Tibial artery (tissue), 4 donors: ENCODE measurements at regions of chr10 and their contacts with region 1.

Region 1: DNA sequence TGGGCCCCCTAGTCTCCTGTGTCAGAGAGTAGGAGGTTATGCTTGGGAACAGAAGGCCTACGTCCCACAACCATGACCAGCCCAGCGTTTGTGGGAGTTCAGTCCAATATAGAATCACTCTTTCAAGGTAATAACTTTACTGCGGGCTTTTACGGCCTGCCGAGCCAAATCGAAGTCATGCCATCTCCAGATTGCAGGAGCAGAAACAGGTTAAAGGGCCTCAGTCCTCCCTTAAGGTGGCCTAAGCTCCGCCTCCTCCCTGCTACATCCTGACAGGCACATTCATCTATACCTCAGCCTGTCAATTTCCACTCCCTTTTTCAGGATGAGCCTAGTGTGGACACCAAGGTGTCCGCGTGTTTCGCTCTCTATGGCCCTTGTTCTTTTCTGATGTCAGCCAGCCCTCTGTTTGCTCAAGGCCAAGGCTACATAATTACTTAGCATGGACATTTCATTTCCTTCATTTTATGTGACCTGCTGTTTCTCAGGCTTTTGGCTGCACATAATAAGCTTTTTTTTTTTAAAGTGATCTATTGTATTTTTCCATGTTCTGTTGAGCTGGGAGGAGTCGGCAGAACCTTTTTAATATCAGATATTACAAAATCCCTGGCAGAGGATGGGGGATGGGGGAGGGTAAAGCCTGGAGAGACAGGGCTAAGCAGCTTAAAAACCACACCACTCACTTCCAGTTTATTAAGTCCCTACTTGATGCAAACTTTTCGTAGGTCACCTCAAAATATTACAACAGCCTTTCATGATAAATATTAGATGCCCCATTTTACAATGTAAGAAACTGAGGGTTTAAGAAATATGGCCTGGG is 84.6 kb downstream of the CACNB2 start:
- DNase-seq: no peak
- H3K4me3 ChIP-seq: no peak overlapping the region
- H3K27ac ChIP-seq: no peak overlapping the region
- H3K4me1 ChIP-seq: peaks cover 0 to 13% (median 3%) of the 10 kb centered on the region in 4 donors
- H3K27me3 ChIP-seq: no peaks in the 10 kb centered on the region
- CTCF ChIP-seq: no peak

Region 2: DNA sequence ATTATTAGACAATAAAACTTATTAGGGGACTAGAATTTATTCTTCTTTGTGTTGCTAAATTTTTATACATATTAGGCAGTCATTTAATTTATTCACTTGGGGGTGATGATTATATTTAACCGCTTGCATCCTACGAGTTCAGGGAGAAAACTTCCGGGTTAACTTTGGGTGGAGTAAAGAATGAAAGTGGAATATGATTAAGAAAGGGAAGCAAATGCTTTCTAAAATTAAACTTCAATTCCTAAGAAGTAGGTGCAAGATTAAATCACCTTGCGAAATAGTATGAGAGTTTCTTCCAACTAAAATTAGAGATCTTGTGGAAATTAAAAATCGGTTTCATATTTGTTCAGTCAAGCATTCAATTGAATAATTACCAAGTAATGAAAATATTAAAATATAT is 382.2 kb before region 1 on chr10:
- intact Hi-C with region 1: loop called (anchors 2 kb)
- DNase-seq: no peak
- H3K4me3 ChIP-seq: no peak overlapping the region
- H3K27ac ChIP-seq: no peak overlapping the region
- H3K4me1 ChIP-seq: peaks cover 0 to 1% (median 0%) of the 10 kb centered on the region in 4 donors
- H3K27me3 ChIP-seq: peaks cover 0 to 3% of the 10 kb centered on the region in 2 donors
- CTCF ChIP-seq: no peak

Region 3: GRCh38 chr10:18104223-18104872 is 120.5 kb before region 1 on chr10:
- intact Hi-C with region 1: no loop called
- DNase-seq: peak in 1 of 2 donors; percentile 71
- H3K4me3 ChIP-seq: peak overlapping the region in 1 of 2 donors; percentile 37
- H3K27ac ChIP-seq: peak overlapping the region in 1 of 2 donors; percentile 23
- H3K4me1 ChIP-seq: no peaks in the 10 kb centered on the region
- H3K27me3 ChIP-seq: no peaks in the 10 kb centered on the region
- CTCF ChIP-seq: peak; percentile 67 to 78

Region 4: DNA sequence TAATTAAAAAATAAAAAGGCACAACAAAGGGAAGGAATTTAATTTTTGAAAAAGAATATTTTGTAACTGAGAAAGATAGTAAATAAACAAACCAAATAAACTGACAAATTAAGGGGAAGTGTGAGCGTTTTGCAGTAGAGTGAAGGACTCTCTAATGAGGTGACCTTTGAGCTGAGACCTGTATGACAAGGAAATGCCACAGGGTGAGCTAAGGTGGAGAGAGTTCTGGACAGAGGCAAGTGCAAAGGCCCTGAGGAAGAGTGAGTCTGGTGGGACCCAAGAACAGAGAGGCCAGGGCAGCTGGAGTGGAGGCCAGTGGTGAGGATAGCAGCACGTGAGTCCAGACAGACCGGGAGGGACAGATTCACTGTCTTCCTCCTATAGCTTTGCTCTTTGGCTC is 94.8 kb after region 1 on chr10:
- intact Hi-C with region 1: no loop called
- DNase-seq: no peak
- H3K4me3 ChIP-seq: no peak overlapping the region
- H3K27ac ChIP-seq: no peak overlapping the region
- H3K4me1 ChIP-seq: peaks cover 0 to 13% (median 2%) of the 10 kb centered on the region in 4 donors
- H3K27me3 ChIP-seq: no peaks in the 10 kb centered on the region
- CTCF ChIP-seq: no peak